PC-3 (cell line): ENCODE measurements at regions of chrX and their contacts with region 1.

Region 1: GRCh38 chrX:96474029-96474740 is 210.5 kb upstream of the DIAPH2 start:
- DNase-seq: peak; percentile 85
- ATAC-seq: peak; percentile 91
- H3K4me3 ChIP-seq: no peak overlapping the region
- H3K27ac ChIP-seq: peak overlapping the region; percentile 97
- H3K4me1 ChIP-seq: peaks cover 25% of the 10 kb centered on the region
- H3K27me3 ChIP-seq: no peaks in the 10 kb centered on the region
- CTCF ChIP-seq: no peak

Region 2: DNA sequence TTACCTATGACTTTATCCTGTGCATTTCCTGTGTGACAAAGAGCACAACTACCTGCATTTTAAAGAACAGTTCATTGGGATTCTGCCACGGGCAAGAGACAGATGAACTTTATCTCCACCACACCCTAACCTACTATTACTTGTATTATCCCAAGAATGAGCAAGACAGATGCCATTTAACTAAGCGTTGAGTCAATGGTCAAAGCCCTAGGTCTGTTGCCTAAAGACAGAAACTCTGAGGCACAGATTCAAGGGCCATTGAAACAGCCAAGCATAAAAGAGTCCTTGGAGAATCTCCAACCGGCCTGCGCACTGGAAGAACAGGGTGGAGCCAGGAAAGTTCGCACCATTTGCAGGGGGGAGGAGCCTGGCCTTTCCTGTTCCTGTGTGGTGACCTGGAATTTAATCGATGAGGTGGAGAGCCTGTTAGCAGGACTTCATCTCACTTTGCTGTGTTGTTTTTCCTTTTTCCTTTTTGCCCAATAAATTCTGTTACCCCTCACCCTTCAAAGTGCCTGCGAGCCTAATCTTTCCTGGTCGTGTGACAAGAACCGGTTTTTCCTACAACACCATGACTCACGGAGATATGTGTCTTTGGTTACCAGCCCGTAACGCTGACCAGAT is 64.0 kb after region 1 on chrX:
- CTCF ChIA-PET with region 1: no interaction called
- POLR2A ChIA-PET with region 1: no interaction called
- intact Hi-C with region 1: loop called (anchors 2 kb)
- DNase-seq: peak; percentile 85
- ATAC-seq: peak; percentile 76
- H3K4me3 ChIP-seq: peak overlapping the region; percentile 58
- H3K27ac ChIP-seq: peak overlapping the region; percentile 96
- H3K4me1 ChIP-seq: peaks cover 28% of the 10 kb centered on the region
- H3K27me3 ChIP-seq: no peaks in the 10 kb centered on the region
- CTCF ChIP-seq: no peak

Region 3: GRCh38 chrX:96684339-96685209 is 210.4 kb after region 1 on chrX and contains the start of gene DIAPH2:
- CTCF ChIA-PET with region 1: no interaction called
- POLR2A ChIA-PET with region 1: no interaction called
- intact Hi-C with region 1: loop called (anchors 2 kb)
- DNase-seq: peak; percentile 86
- ATAC-seq: peak; percentile 86
- H3K4me3 ChIP-seq: peak within 1 kb of the TSS; percentile 95
- H3K27ac ChIP-seq: peak within 1 kb of the TSS; percentile 86
- H3K4me1 ChIP-seq: peaks cover 13% of the 10 kb centered on the region
- H3K27me3 ChIP-seq: no peaks in the 10 kb centered on the region
- CTCF ChIP-seq: 0 out of 2 replicates have a peak, but pooled peaks have one; percentile 8
- total RNA-seq, gene DIAPH2: 15.1 and 19.6 TPM in 2 replicates

Region 4: GRCh38 chrX:96715481-96715880 is 241.3 kb after region 1 on chrX:
- CTCF ChIA-PET with region 1: no interaction called
- POLR2A ChIA-PET with region 1: no interaction called
- intact Hi-C with region 1: loop called (anchors 10 kb)
- DNase-seq: peak; percentile 78
- ATAC-seq: peak; percentile 95
- H3K4me3 ChIP-seq: peak overlapping the region; percentile 27; the same call in 1 of the 2 replicates
- H3K27ac ChIP-seq: peak overlapping the region; percentile 62
- H3K4me1 ChIP-seq: peaks cover 27% of the 10 kb centered on the region
- H3K27me3 ChIP-seq: no peaks in the 10 kb centered on the region
- CTCF ChIP-seq: no peak